Caco-2 (cell line): ENCODE measurements at regions of chr1 and their contacts with region 1.

Region 1: DNA sequence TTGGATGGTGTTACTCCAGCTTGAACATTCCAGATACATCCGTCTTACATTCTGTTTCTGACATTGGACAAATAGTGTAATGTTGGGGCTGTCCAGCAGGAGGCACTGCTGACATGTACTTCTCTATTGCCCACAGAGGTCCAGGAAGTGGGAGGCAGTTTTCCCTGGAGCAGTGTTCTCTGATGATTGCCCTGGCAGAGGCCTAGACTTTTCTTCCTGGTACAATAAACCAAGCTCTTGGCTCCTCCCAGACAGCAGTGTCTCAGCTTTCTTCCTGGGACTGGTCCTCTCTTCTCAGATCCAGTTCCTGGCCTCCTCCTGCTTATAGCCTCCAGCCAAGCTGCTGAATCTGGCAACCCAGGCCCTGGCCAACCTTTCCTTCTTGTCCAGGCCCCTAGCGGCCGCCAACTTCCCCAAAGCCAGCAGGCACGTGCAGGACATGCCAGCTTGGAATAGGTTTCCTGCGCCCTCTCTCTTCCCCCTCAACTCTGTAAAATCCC is 14.9 kb upstream of the IFNLR1 start:
- DNase-seq: peak; percentile 70 to 73
- H3K4me3 ChIP-seq: no peak overlapping the region
- H3K4me3 Mint-ChIP-seq: no peak overlapping the region
- H3K27ac Mint-ChIP-seq: no peak overlapping the region
- H3K4me1 ChIP-seq: no peaks in the 10 kb centered on the region
- H3K4me1 Mint-ChIP-seq: no peaks in the 10 kb centered on the region
- H3K27me3 ChIP-seq: no peaks in the 10 kb centered on the region
- H3K27me3 Mint-ChIP-seq: no peaks in the 10 kb centered on the region
- CTCF ChIP-seq: peak; percentile 59 to 77

Region 2: DNA sequence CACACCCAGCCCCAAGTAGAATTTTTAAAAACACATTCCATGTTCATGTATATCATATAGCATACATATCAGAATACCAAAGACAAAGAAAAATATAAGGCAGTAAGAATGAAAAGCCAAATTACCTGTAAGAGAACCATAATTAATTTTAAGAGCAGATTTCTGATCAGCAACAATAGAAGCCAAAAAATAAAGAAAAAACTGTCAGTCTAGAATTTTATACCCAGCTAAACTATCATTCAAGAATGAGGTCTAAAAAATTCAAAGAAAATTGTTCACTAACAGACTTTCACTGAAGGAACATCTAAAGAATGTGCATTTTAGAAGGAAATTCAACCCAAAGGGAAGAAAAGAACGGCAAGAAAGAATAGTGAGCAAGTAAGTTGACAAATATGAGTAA is 323.3 kb before region 1 on chr1:
- CTCF ChIA-PET with region 1: no interaction called
- POLR2A ChIA-PET with region 1: no interaction called
- intact Hi-C with region 1: no loop called
- DNase-seq: no peak
- H3K4me3 ChIP-seq: no peak overlapping the region
- H3K4me3 Mint-ChIP-seq: no peak overlapping the region
- H3K27ac Mint-ChIP-seq: no peak overlapping the region
- H3K4me1 ChIP-seq: 0 out of 2 replicates have a peak, but pooled peaks cover 7% of the 10 kb centered on the region
- H3K4me1 Mint-ChIP-seq: no peaks in the 10 kb centered on the region
- H3K27me3 ChIP-seq: no peaks in the 10 kb centered on the region
- H3K27me3 Mint-ChIP-seq: no peaks in the 10 kb centered on the region
- CTCF ChIP-seq: no peak

Region 3: GRCh38 chr1:24266398-24266941 is 64.5 kb after region 1 on chr1:
- CTCF ChIA-PET with region 1: no interaction called
- POLR2A ChIA-PET with region 1: no interaction called
- intact Hi-C with region 1: no loop called
- DNase-seq: peak; percentile 30 to 73
- H3K4me3 ChIP-seq: no peak overlapping the region
- H3K4me3 Mint-ChIP-seq: no peak overlapping the region
- H3K27ac Mint-ChIP-seq: no peak overlapping the region
- H3K4me1 ChIP-seq: no peaks in the 10 kb centered on the region
- H3K4me1 Mint-ChIP-seq: no peaks in the 10 kb centered on the region
- H3K27me3 ChIP-seq: no peaks in the 10 kb centered on the region
- H3K27me3 Mint-ChIP-seq: no peaks in the 10 kb centered on the region
- CTCF ChIP-seq: no peak

Region 4: GRCh38 chr1:24308365-24309015 is 106.5 kb after region 1 on chr1:
- CTCF ChIA-PET with region 1: interaction called, 9 read pairs
- POLR2A ChIA-PET with region 1: no interaction called
- intact Hi-C with region 1: loop called (anchors 10 kb)
- DNase-seq: peak in 1 of 2 experiments; percentile 14
- H3K4me3 ChIP-seq: no peak overlapping the region
- H3K4me3 Mint-ChIP-seq: no peak overlapping the region
- H3K27ac Mint-ChIP-seq: no peak overlapping the region
- H3K4me1 ChIP-seq: 0 out of 2 replicates have a peak, but pooled peaks cover 6% of the 10 kb centered on the region
- H3K4me1 Mint-ChIP-seq: peaks cover 7% of the 10 kb centered on the region
- H3K27me3 ChIP-seq: no peaks in the 10 kb centered on the region
- H3K27me3 Mint-ChIP-seq: no peaks in the 10 kb centered on the region
- CTCF ChIP-seq: peak in 1 of 2 experiments; percentile 17